Left ventricle myocardium superior (tissue), 1 donor: ENCODE measurements at regions of chrX and their contacts with region 1.

Region 1: GRCh38 chrX:10636337-10636736 is 16.0 kb upstream of the MID1 start:
- DNase-seq: no peak
- ATAC-seq: peak; percentile 81

Region 2: GRCh38 chrX:10189317-10190268 is 446.7 kb before region 1 on chrX:
- intact Hi-C with region 1: loop called (anchors 10 kb)
- DNase-seq: peak; percentile 68
- ATAC-seq: peak; percentile 89

Region 3: GRCh38 chrX:10794203-10794630 is 157.9 kb after region 1 on chrX:
- intact Hi-C with region 1: no loop called
- DNase-seq: no peak
- ATAC-seq: no peak

Region 4: GRCh38 chrX:11016728-11017127 is 380.4 kb after region 1 on chrX:
- intact Hi-C with region 1: no loop called
- DNase-seq: no peak
- ATAC-seq: no peak